ENCODE measurements at regions of chr16 and their contacts with region 1.

Region 1: GRCh38 chr16:89442990-89443731 is 47.2 kb downstream of the ANKRD11 start:
- DNase-seq: peak; percentile 95
- H3K4me3 Mint-ChIP-seq: peak overlapping the region; percentile 68
- H3K27ac Mint-ChIP-seq: peak overlapping the region; percentile 95
- H3K4me1 Mint-ChIP-seq: peaks cover 49% of the 10 kb centered on the region
- H3K27me3 Mint-ChIP-seq: no peaks in the 10 kb centered on the region
- CTCF ChIP-seq: peak; percentile 12

Region 2: GRCh38 chr16:89330177-89330856 is 112.8 kb before region 1 on chr16:
- CTCF ChIA-PET with region 1: no interaction called
- POLR2A ChIA-PET with region 1: no interaction called
- intact Hi-C with region 1: no loop called
- DNase-seq: peak; percentile 74
- H3K4me3 Mint-ChIP-seq: no peak overlapping the region
- H3K27ac Mint-ChIP-seq: peak overlapping the region; percentile 54
- H3K4me1 Mint-ChIP-seq: peaks cover 31% of the 10 kb centered on the region
- H3K27me3 Mint-ChIP-seq: no peaks in the 10 kb centered on the region
- CTCF ChIP-seq: no peak

Region 3: DNA sequence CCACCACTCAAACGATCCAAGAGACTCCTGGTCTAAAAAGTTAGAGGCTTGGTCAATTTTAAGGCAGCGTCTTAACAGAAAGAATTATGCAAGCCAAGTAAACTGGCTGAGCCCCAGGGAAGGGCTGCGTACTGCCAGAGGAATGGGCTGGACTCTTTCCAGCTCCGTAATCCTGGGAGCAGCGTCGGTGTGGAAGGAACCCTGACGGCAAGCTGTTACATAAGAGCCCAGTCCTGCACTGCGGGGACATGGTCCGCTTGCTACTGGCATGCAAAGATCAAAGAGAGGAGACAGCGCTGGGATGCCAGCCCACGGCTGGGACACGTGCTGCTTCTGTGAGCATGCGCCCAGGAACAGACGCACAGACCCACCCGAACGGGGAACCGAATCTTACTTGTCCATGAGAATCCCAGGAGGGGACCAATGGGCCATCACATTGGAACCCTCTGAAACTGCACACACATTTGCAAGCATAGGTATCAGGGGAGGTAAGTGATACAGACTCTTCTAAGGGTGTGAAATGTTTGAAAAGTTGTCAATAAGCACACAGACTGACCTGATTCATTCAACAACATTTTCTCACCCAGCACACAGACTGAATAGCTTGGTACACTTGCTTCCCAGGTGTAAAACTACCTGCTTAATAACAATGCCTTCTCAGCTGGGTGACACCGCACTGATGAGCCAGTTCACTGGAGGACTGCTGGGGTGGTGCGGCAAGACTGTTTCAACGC is 47.9 kb before region 1 on chr16:
- CTCF ChIA-PET with region 1: interaction called, 4 read pairs
- POLR2A ChIA-PET with region 1: interaction called, 18 read pairs
- intact Hi-C with region 1: loop called (anchors 5 kb)
- DNase-seq: peak; percentile 98
- H3K4me3 Mint-ChIP-seq: peak overlapping the region; percentile 14
- H3K27ac Mint-ChIP-seq: peak overlapping the region; percentile 52
- H3K4me1 Mint-ChIP-seq: peaks cover 29% of the 10 kb centered on the region
- H3K27me3 Mint-ChIP-seq: no peaks in the 10 kb centered on the region
- CTCF ChIP-seq: no peak

Region 4: DNA sequence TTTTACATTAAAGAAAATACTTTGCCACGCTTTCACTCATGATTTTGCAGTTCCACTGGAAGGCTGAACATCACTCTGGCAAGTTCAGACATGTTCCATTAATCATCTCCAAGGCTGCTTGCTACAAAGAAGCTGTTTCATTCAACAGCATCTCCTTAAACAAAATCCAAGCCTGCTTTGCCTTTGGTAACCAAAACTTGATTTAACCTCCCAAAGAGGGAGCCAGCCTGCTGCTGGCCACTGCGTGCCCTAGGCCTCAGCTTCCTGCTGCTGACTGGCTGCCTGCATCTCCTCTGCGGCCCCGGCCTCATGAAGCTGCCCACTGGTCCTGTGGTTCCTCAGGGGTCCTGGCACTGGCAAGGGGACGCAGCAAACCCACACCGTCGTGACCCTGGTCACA is 15.4 kb after region 1 on chr16:
- CTCF ChIA-PET with region 1: interaction called, 5 read pairs
- POLR2A ChIA-PET with region 1: interaction called, 19 read pairs
- intact Hi-C with region 1: no loop called
- DNase-seq: peak; percentile 71
- H3K4me3 Mint-ChIP-seq: peak overlapping the region; percentile 18
- H3K27ac Mint-ChIP-seq: peak overlapping the region; percentile 83
- H3K4me1 Mint-ChIP-seq: peaks cover 23% of the 10 kb centered on the region
- H3K27me3 Mint-ChIP-seq: no peaks in the 10 kb centered on the region
- CTCF ChIP-seq: no peak

Region 5: GRCh38 chr16:89482150-89482816 is 39.1 kb after region 1 on chr16:
- CTCF ChIA-PET with region 1: interaction called, 6 read pairs
- POLR2A ChIA-PET with region 1: interaction called, 55 read pairs
- intact Hi-C with region 1: loop called (anchors 5 kb)
- DNase-seq: no peak
- H3K4me3 Mint-ChIP-seq: peak overlapping the region; percentile 49
- H3K27ac Mint-ChIP-seq: peak overlapping the region; percentile 61
- H3K4me1 Mint-ChIP-seq: peaks cover 52% of the 10 kb centered on the region
- H3K27me3 Mint-ChIP-seq: no peaks in the 10 kb centered on the region
- CTCF ChIP-seq: no peak

Region 6: GRCh38 chr16:89565506-89566372 is 122.6 kb after region 1 on chr16:
- CTCF ChIA-PET with region 1: no interaction called
- POLR2A ChIA-PET with region 1: no interaction called
- intact Hi-C with region 1: no loop called
- DNase-seq: peak; percentile 75
- H3K4me3 Mint-ChIP-seq: peak overlapping the region; percentile 40
- H3K27ac Mint-ChIP-seq: peak overlapping the region; percentile 49
- H3K4me1 Mint-ChIP-seq: peaks cover 17% of the 10 kb centered on the region
- H3K27me3 Mint-ChIP-seq: no peaks in the 10 kb centered on the region
- CTCF ChIP-seq: peak; percentile 76

Measured in MCF 10A (cell line).